ENCODE measurements at regions of chr14 and their contacts with region 1.

Region 1: DNA sequence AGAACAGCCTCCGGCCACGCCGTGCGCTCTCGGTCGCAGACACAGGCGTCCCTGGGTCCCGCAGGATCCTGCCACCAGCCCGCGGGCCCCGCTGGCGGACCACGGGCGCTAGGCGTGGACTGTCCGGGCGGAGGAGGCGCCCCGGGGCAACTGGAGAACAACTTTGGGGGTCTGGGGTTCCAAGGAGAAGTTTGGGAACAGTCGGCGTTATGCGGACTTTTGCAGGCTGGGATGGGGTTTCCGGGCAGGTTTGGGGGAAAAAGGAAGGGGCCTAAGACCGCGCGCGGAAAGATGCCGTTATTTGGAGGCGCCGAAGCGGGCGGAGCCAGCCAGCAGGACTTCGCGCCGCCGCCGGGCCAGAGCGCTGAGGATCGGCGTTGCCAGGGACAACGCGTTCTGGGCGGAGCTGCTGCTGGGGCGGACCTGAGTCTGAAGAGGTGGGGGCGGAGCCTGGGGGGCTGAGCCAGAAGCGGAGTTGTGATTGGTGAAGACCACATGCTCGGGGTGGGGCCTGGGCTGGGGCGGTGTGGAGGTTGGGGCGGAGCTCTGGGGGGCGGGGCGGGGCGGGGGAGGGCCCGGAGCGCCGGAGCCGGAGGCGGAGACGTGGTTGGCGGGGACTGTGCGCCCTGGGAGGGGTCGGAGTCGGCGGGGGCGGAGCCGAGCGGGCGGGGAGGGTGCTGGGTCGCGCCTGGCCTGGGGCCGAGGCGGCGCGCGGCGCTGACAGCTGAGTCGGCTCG is at the start of gene CYP46A1:
- DNase-seq: peak; percentile 100
- H3K4me3 Mint-ChIP-seq: peak within 1 kb of the TSS; percentile 87
- H3K27ac Mint-ChIP-seq: peak within 1 kb of the TSS; percentile 66
- H3K4me1 Mint-ChIP-seq: peaks cover 3% of the 10 kb centered on the region
- H3K27me3 Mint-ChIP-seq: peaks cover 4% of the 10 kb centered on the region
- total RNA-seq, gene CYP46A1: 0.10 to 0.12 TPM

Region 2: DNA sequence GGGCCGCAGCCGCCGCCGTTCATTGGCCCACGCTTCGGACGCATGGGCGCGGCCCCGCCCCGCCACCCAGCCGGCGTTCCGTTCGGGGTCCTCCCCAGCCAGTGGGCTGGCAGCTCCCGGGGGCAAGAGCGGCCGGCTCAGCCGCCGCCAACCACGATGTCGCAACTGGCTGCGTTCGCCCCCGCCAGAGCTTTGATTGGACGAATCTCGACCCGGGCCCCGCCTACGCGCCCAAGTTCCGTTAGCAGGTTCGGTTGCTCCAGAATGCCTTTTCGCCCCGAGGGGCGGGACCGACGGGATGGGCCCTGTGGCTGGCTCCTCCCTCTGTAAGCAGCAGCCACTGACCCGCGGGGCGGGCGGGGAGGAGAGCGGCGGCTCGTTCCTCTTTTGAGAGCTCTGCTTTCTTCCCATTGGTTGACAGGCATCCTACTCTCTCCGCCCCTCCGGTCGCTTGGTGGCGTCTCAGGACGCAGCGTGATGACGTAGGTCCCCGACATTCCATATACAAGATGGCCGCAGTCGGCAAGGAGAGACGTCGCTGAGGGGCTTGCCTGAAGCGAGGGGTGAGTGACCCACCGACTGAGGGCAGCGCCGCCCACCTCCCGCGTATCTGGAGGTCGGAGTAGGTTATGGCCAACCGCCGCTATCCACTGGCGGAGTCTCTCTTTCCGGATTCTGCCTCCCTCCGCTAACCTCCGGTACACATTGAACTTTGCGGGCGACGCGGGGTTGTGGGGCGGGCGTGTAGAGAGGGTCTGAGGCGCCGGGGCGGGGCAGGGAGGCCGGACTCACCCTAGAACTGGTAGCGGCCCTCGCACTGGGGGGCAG is 202.7 kb before region 1 on chr14 and contains the start of gene CCNK:
- CTCF ChIA-PET with region 1: no interaction called
- intact Hi-C with region 1: loop called (anchors 1 kb)
- DNase-seq: peak; percentile 100
- H3K4me3 Mint-ChIP-seq: peak within 1 kb of the TSS; percentile 90
- H3K27ac Mint-ChIP-seq: peak within 1 kb of the TSS; percentile 91
- H3K4me1 Mint-ChIP-seq: peaks cover 53% of the 10 kb centered on the region
- H3K27me3 Mint-ChIP-seq: no peaks in the 10 kb centered on the region
- total RNA-seq, gene CCNK: 90.7 to 99.0 TPM

Region 3: GRCh38 chr14:99604283-99604765 is 79.5 kb before region 1 on chr14:
- CTCF ChIA-PET with region 1: interaction called, 6 read pairs
- intact Hi-C with region 1: loop called (anchors 1 kb)
- DNase-seq: peak; percentile 92
- H3K4me3 Mint-ChIP-seq: peak overlapping the region; percentile 86
- H3K27ac Mint-ChIP-seq: peak overlapping the region; percentile 78
- H3K4me1 Mint-ChIP-seq: peaks cover 29% of the 10 kb centered on the region
- H3K27me3 Mint-ChIP-seq: peaks cover 2% of the 10 kb centered on the region

Region 4: DNA sequence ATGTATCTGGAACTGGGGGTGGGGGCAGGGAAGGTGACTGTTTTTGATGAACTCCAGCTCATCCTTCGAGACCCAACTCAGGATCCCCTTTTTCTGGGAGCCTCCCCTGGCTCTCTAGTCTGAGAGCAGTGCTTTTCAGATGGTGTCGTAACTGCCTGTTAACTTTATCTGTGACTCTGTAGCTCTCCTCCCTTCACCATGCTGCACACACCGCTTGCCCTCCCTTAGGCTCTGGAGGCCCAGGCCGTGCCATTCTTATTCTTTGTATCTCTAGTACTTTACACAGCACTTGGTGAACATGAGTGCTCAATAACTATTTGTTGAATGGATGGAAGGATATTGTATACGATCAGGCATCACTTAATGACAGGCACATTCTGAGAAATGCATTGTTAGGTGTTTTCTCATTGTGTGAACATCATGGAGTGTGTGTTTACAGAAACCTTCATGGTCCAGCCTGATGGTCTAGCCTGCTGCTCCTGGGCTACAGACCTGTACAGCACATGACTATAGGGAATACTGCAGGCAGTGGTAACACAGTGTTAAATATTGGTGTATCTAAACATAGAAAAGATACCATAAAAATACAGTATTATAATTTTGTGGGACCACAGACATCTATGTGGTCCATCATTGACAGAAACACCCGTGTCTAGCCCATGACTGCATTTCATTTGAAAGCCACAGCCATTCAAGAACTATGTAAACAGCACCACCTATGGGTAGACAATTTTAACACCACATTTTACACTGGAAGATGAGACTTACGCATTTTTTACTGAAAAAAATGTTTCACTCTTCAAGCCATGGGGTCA is 201.3 kb after region 1 on chr14:
- CTCF ChIA-PET with region 1: interaction called, 7 read pairs
- intact Hi-C with region 1: loop called (anchors 1 kb)
- DNase-seq: peak; percentile 23
- H3K4me3 Mint-ChIP-seq: no peak overlapping the region
- H3K27ac Mint-ChIP-seq: no peak overlapping the region
- H3K4me1 Mint-ChIP-seq: no peaks in the 10 kb centered on the region
- H3K27me3 Mint-ChIP-seq: peaks cover 7% of the 10 kb centered on the region

Region 5: GRCh38 chr14:99910337-99911309 is 226.8 kb after region 1 on chr14:
- CTCF ChIA-PET with region 1: no interaction called
- intact Hi-C with region 1: no loop called
- DNase-seq: no peak
- H3K4me3 Mint-ChIP-seq: no peak overlapping the region
- H3K27ac Mint-ChIP-seq: no peak overlapping the region
- H3K4me1 Mint-ChIP-seq: no peaks in the 10 kb centered on the region
- H3K27me3 Mint-ChIP-seq: peaks cover 3% of the 10 kb centered on the region

Region 6: DNA sequence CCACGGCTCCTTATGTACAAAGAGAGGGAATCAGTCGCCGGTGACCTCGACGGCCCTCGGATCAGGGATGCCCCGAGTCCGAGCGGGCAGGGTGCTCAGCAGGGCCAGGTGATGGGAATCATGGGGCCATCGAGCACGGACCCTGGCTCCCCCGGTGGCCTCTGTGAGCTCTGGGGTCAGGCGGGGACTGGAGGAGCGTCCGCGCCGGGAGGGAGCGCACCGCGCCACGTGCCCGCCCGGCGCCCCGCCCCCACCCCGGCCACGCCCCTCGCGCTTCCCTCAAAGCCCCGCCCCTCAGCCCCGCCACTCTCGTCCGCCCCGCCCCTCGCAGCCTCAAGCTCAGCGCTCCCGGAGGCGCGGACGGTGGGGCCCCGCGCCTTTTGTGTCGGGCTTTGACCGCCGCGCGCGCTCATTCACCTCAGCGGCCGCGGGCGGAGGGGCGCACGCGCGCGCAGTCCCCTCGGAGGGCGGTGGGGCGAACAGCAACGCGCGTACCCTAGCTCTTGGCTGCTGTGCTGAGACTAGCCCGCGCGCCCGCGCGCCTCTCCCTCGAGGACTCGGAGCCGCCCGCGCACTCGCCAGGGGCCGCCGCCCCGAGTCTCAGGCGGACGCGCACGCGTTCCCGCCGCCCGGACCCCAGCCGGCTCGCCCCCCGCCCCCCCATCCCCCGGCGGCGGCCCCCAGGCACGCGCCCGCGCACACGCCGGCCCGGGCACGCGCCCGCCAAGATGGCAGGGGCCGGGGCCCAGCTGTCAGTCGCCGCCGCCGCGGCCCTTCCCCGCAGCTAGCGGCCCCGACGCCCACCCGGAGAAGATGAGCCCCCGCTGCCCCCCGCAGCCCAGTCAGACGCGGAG is 287.5 kb after region 1 on chr14:
- CTCF ChIA-PET with region 1: no interaction called
- intact Hi-C with region 1: loop called (anchors 2 kb)
- DNase-seq: peak; percentile 86
- H3K4me3 Mint-ChIP-seq: peak overlapping the region; percentile 52
- H3K27ac Mint-ChIP-seq: no peak overlapping the region
- H3K4me1 Mint-ChIP-seq: peaks cover 17% of the 10 kb centered on the region
- H3K27me3 Mint-ChIP-seq: peaks cover 12% of the 10 kb centered on the region

Measured in activated naive CD4-positive, alpha-beta T cell treated with anti-CD3 and anti-CD28 coated beads for 36 hours (primary cell).